ENCODE measurements at regions of chr20 and their contacts with region 1.

Region 1: GRCh38 chr20:58236612-58237330 is 8.3 kb upstream of the ANKRD60 start:
- DNase-seq: peak; percentile 62 to 77
- ATAC-seq: peak; percentile 87 to 94 (median 92)
- H3K4me3 ChIP-seq: peak overlapping the region in 9 of 10 donors; percentile 26 to 66 (median 50)
- H3K27ac ChIP-seq: no peak overlapping the region
- H3K4me1 ChIP-seq: peaks cover 0 to 17% (median 5%) of the 10 kb centered on the region in 9 donors
- H3K27me3 ChIP-seq: peaks cover 0 to 7% (median 0%) of the 10 kb centered on the region in 7 donors
- CTCF ChIP-seq: peak; percentile 90 to 98 (median 96)

Region 2: GRCh38 chr20:58296051-58296795 is 59.5 kb after region 1 on chr20:
- intact Hi-C with region 1: no loop called
- DNase-seq: no peak
- ATAC-seq: no peak
- H3K4me3 ChIP-seq: no peak overlapping the region
- H3K27ac ChIP-seq: no peak overlapping the region
- H3K4me1 ChIP-seq: peaks cover 0 to 15% (median 0%) of the 10 kb centered on the region in 9 donors
- H3K27me3 ChIP-seq: no peaks in the 10 kb centered on the region
- CTCF ChIP-seq: no peak

Region 3: GRCh38 chr20:58440021-58440767 is 203.4 kb after region 1 on chr20:
- intact Hi-C with region 1: loop called in 7 of 10 experiments (anchors 5 kb)
- DNase-seq: no peak
- ATAC-seq: peak in 7 of 8 donors; percentile 46 to 83 (median 67)
- H3K4me3 ChIP-seq: no peak overlapping the region
- H3K27ac ChIP-seq: peak overlapping the region in 8 of 10 donors; percentile 28 to 71 (median 62)
- H3K4me1 ChIP-seq: peaks cover 0 to 33% (median 22%) of the 10 kb centered on the region in 9 donors
- H3K27me3 ChIP-seq: no peaks in the 10 kb centered on the region
- CTCF ChIP-seq: no peak

Region 4: GRCh38 chr20:58692594-58693226 is 455.9 kb after region 1 on chr20 and contains the start of gene NPEPL1:
- intact Hi-C with region 1: loop called in 2 of 10 experiments (anchors 5 kb)
- DNase-seq: peak; percentile 50 to 79
- ATAC-seq: peak; percentile 69 to 95 (median 86)
- H3K4me3 ChIP-seq: peak within 1 kb of the TSS in 9 of 10 donors; percentile 50 to 69 (median 59)
- H3K27ac ChIP-seq: peak within 1 kb of the TSS; percentile 74 to 99 (median 94)
- H3K4me1 ChIP-seq: peaks cover 14 to 47% (median 36%) of the 10 kb centered on the region in 9 donors
- H3K27me3 ChIP-seq: no peaks in the 10 kb centered on the region
- CTCF ChIP-seq: peak in 2 of 9 donors; percentile 25 to 33
- total RNA-seq, gene NPEPL1: 23.1 to 35.9 (median 29.9) TPM

Region 5: DNA sequence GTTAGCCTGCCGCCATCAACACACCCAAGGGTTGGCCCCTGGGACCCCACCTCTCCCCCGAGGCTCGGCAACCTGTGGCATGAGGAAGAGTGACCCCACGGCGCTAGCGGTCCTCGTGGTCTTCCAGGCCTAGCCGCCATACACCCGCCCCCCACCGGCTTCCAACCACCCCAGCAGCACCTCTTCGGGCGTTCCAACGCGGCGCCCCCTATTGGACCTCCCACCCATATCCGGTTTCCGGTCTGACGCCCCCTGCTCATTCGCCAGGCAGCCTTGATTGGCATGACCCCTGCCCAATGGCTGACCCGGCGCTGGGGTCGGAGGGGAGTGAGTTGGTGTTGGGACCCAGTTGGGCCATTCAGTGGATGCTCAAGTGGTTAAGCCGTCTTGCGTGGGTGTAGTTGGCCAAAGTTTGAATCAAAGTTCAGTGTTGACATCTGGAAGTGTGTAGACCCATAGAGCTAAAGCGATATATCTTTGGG is 614.0 kb after region 1 on chr20 and contains the start of gene GNAS-AS1:
- intact Hi-C with region 1: loop called in 4 of 10 experiments (anchors 5 to 10 kb)
- DNase-seq: peak; percentile 85 to 87
- ATAC-seq: peak; percentile 74 to 93 (median 88)
- H3K4me3 ChIP-seq: peak within 1 kb of the TSS; percentile 28 to 64 (median 54)
- H3K27ac ChIP-seq: no peak within 1 kb of the TSS
- H3K4me1 ChIP-seq: peaks cover 0 to 30% (median 19%) of the 10 kb centered on the region in 9 donors
- H3K27me3 ChIP-seq: peaks cover 2 to 89% (median 58%) of the 10 kb centered on the region in 7 donors
- CTCF ChIP-seq: peak in 2 of 9 donors; percentile 8 to 12
- total RNA-seq, gene GNAS-AS1: 0.15 to 1.5 (median 0.41) TPM